Activated CD4-positive, alpha-beta memory T cell treated with anti-CD3 and anti-CD28 coated beads for 36 hours (primary cell): ENCODE measurements at regions of chr1 and their contacts with region 1.

Region 1: DNA sequence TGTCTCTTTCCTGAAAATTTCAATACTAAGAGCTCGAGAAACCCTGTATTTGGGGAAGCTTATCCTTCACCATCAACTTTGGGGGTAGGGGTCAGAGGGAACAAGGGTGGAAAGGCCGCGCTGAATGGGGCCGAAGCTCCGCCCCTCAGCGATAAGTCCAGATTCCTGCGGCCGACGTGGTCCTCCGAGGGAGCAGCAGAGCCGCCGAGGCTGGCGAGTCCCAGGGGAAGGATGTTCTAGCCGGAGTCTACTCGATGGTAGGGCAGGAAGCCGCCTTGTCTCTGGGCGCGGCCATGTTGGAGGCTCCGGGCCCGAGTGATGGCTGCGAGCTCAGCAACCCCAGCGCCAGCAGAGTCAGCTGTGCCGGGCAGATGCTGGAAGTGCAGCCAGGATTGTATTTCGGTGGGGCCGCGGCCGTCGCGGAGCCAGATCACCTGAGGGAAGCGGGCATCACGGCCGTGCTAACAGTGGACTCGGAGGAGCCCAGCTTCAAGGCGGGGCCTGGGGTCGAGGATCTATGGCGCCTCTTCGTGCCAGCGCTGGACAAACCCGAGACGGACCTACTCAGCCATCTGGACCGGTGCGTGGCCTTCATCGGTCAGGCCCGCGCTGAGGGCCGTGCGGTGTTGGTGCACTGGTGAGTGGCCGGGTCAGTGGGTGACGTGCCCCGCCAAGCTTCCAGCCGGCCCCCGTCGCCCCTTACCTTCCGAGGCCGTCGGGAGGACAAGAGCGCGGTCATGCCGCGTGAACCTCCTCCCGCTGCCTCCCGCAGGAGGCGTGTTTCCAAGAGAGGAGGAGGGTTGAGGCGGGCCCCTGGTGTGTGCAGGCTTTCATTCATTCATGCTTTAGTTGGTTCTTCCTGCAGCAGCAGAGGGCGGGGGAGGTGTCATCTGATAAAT is at the start of gene DUSP12:
- DNase-seq: peak; percentile 94
- H3K4me3 Mint-ChIP-seq: peak within 1 kb of the TSS; percentile 98
- H3K27ac Mint-ChIP-seq: peak within 1 kb of the TSS; percentile 95
- H3K4me1 Mint-ChIP-seq: peaks cover 36% of the 10 kb centered on the region
- H3K27me3 Mint-ChIP-seq: peaks cover 1% of the 10 kb centered on the region
- total RNA-seq, gene DUSP12: 25.9 to 28.5 TPM

Region 2: DNA sequence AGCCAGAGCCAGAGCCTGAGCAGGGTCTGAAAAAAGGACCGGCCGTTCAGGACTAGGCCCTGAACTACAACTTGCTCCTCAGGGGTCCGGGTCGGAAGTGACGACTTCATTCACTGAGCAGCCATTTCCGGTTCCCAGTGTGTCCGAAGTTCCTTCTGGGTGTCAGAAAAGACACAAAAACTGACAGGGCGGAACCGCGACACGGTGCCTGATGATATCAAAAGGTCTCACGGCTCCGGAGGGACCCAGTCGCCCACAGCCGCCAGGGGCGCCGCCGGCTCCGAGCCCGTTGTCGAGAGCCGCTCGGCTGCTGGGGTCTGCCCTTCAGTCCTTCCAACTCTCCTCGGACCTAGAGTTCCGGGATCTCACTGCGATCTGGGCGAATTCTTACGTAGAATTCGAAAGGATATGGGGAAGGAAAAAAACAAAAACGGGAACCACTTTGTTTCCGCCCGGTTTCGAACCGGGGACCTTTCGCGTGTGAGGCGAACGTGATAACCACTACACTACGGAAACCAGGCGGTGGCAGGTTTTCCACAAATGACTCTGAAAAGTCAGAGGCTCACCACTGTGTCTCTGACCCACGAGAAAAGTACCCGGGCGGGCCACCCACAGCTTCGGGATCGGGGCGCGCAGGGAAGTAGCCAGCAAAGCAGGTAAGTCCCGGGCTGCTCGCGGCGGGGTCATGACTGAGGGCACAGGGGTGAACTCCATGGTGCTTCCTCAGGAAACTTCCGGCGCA is 350.3 kb before region 1 on chr1:
- CTCF ChIA-PET with region 1: no interaction called
- POLR2A ChIA-PET with region 1: no interaction called
- intact Hi-C with region 1: loop called (anchors 10 kb)
- DNase-seq: peak; percentile 94
- H3K4me3 Mint-ChIP-seq: peak overlapping the region; percentile 93
- H3K27ac Mint-ChIP-seq: peak overlapping the region; percentile 99
- H3K4me1 Mint-ChIP-seq: peaks cover 37% of the 10 kb centered on the region
- H3K27me3 Mint-ChIP-seq: peaks cover 3% of the 10 kb centered on the region

Region 3: GRCh38 chr1:161511018-161511755 is 238.6 kb before region 1 on chr1:
- CTCF ChIA-PET with region 1: no interaction called
- POLR2A ChIA-PET with region 1: no interaction called
- intact Hi-C with region 1: no loop called
- DNase-seq: no peak
- H3K4me3 Mint-ChIP-seq: no peak overlapping the region
- H3K27ac Mint-ChIP-seq: no peak overlapping the region
- H3K4me1 Mint-ChIP-seq: peaks cover 9% of the 10 kb centered on the region
- H3K27me3 Mint-ChIP-seq: peaks cover 3% of the 10 kb centered on the region

Region 4: GRCh38 chr1:161531986-161532643 is 217.6 kb before region 1 on chr1:
- CTCF ChIA-PET with region 1: no interaction called
- POLR2A ChIA-PET with region 1: interaction called, 5 read pairs
- intact Hi-C with region 1: loop called (anchors 10 kb)
- DNase-seq: no peak
- H3K4me3 Mint-ChIP-seq: no peak overlapping the region
- H3K27ac Mint-ChIP-seq: no peak overlapping the region
- H3K4me1 Mint-ChIP-seq: peaks cover 13% of the 10 kb centered on the region
- H3K27me3 Mint-ChIP-seq: peaks cover 5% of the 10 kb centered on the region

Region 5: GRCh38 chr1:161688946-161689345 is 60.8 kb before region 1 on chr1:
- CTCF ChIA-PET with region 1: no interaction called
- POLR2A ChIA-PET with region 1: no interaction called
- intact Hi-C with region 1: no loop called
- DNase-seq: no peak
- H3K4me3 Mint-ChIP-seq: no peak overlapping the region
- H3K27ac Mint-ChIP-seq: no peak overlapping the region
- H3K4me1 Mint-ChIP-seq: no peaks in the 10 kb centered on the region
- H3K27me3 Mint-ChIP-seq: peaks cover 12% of the 10 kb centered on the region

Region 6: GRCh38 chr1:161726596-161727457 is 22.9 kb before region 1 on chr1:
- CTCF ChIA-PET with region 1: interaction called, 3 read pairs
- POLR2A ChIA-PET with region 1: interaction called, 6 read pairs
- intact Hi-C with region 1: loop called (anchors 2 kb)
- DNase-seq: peak; percentile 77
- H3K4me3 Mint-ChIP-seq: peak overlapping the region; percentile 74
- H3K27ac Mint-ChIP-seq: no peak overlapping the region
- H3K4me1 Mint-ChIP-seq: peaks cover 47% of the 10 kb centered on the region
- H3K27me3 Mint-ChIP-seq: peaks cover 32% of the 10 kb centered on the region

Region 7: GRCh38 chr1:161738627-161739287 is 11.0 kb before region 1 on chr1:
- CTCF ChIA-PET with region 1: interaction called, 13 read pairs
- POLR2A ChIA-PET with region 1: interaction called, 5 read pairs
- intact Hi-C with region 1: no loop called
- DNase-seq: peak; percentile 75
- H3K4me3 Mint-ChIP-seq: no peak overlapping the region
- H3K27ac Mint-ChIP-seq: peak overlapping the region; percentile 49
- H3K4me1 Mint-ChIP-seq: peaks cover 29% of the 10 kb centered on the region
- H3K27me3 Mint-ChIP-seq: peaks cover 2% of the 10 kb centered on the region

Region 8: DNA sequence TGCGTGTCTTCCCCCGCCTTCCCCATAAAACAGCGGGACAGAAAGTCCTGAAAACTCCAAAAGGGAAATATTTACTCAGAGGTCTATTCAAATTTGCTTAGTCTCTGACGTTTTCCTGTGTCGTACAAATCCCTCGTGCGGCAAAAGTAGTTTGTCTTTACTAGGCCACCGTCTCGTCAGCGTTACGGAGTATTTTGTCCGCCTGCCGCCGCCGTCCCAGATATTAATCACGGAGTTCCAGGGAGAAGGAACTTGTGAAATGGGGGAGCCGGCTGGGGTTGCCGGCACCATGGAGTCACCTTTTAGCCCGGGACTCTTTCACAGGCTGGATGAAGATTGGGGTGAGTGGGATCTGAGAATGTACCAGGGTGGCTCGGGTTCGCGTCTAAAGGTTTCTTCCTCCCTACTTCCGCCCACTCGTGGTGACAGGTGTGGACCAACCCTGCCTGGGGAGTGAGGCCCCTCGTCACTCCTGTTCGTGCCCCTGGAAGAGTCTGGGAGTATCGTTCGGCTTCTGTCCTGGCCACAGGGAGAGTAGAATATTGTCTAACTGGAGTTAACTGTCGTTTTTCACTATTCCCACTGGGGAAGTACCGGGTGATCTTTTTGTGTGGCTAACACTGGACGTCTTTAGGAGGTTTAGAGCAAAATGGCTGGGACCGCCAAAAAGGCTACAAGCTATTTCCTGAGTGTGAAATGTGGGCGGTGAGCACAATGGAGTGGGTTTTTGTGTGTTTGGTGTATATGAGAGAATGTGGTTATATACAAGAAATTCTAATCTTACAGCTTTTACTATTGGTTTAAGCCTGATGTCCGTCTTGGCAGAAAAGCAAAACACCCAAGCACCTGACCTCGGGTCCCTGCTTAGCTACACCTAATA is 16.6 kb after region 1 on chr1 and contains the start of gene ATF6:
- CTCF ChIA-PET with region 1: interaction called, 6 read pairs
- POLR2A ChIA-PET with region 1: interaction called, 8 read pairs
- intact Hi-C with region 1: loop called (anchors 1 kb)
- DNase-seq: peak; percentile 90
- H3K4me3 Mint-ChIP-seq: peak within 1 kb of the TSS; percentile 98
- H3K27ac Mint-ChIP-seq: peak within 1 kb of the TSS; percentile 93
- H3K4me1 Mint-ChIP-seq: peaks cover 51% of the 10 kb centered on the region
- H3K27me3 Mint-ChIP-seq: no peaks in the 10 kb centered on the region
- total RNA-seq, gene ATF6: 20.8 to 23.0 TPM

Region 9: GRCh38 chr1:161779393-161779792 is 29.6 kb after region 1 on chr1:
- CTCF ChIA-PET with region 1: no interaction called
- POLR2A ChIA-PET with region 1: no interaction called
- intact Hi-C with region 1: no loop called
- DNase-seq: no peak
- H3K4me3 Mint-ChIP-seq: no peak overlapping the region
- H3K27ac Mint-ChIP-seq: no peak overlapping the region
- H3K4me1 Mint-ChIP-seq: peaks cover 9% of the 10 kb centered on the region
- H3K27me3 Mint-ChIP-seq: no peaks in the 10 kb centered on the region